Activated CD4-positive, alpha-beta T cell treated with anti-CD3 and anti-CD28 coated beads, Interleukin-2, amount 10 ng/mL, durations not matched to agents 24 days and 14 days (primary cell): ENCODE measurements at regions of chr7 and their contacts with region 1.

Region 1: DNA sequence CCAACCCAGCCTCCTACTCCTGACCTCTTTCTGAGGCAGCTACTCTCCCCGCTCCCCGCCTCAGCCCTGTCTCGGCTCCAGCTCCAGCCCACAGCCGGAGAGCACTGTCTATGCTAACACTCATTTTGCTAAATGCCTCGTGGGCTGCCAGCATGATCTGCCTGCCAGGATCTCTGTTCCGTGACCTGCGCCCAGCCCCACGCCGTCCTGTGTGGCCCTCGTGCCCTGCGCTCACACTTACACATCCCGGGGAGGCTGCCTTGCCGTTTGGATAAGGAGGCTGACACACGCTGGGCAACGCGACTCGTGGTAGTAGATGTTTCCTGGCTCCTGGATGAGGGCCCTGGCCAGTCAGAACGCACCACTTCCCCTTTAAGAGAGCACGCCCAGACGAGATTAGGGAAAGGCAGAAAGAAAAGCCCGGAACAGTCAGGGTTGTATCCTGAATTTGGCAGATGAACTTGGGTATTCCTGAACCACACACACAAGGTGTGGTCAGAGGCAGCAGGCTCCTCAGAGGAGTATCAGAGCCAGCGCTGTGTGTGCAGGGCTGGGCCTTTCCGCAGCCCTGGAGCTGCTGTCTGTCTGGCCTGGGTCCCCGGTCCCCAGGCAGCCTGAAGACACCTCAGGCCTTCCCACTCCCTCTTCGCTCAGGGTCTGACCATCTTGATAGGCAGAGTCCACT is 97.7 kb upstream of the EFCAB10 start:
- DNase-seq: peak; percentile 81
- H3K4me3 Mint-ChIP-seq: peak overlapping the region; percentile 90
- H3K27ac Mint-ChIP-seq: peak overlapping the region; percentile 93
- H3K4me1 Mint-ChIP-seq: peaks cover 52% of the 10 kb centered on the region
- H3K27me3 Mint-ChIP-seq: peaks cover 2% of the 10 kb centered on the region

Region 2: DNA sequence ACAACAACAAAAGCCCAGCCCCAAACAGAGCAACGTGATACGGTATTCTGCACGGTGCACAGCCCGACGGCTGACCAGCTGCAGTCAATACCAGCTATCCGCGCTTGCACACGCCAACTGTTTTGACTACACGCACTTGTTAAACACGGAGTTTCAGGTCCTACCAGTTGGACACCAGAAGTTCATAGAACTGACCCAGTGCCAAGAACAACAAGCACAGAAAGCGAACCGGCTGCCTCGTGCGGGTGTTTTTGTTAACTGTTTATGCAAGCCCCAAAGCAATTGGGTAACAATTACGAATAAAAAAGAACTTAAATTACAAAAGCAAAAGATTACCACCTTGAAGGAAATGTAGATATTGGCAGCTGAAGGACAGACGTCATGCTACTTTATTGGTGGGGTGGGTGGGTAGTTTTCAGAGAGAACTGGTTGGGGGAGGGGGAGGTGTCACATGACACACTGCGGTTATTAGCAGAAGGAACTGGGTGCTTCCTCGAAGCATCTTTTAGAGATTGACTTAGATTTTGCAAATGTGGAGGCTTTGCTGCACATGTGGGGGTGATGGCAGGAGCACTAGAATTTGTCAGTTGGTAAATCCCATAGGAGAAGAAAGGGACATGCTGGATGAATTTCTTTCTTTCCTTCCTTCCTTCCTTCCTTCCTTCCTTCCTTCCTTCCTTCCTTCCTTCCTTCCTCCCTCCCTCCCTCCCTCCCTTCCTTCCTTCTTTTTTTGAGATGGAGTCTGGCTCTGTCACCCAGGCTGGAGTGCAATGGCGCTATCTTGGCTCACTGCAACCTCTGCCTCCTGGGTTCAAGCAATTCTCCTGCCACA is 13.0 kb after region 1 on chr7:
- intact Hi-C with region 1: loop called (anchors 1 kb)
- DNase-seq: peak; percentile 82
- H3K4me3 Mint-ChIP-seq: peak overlapping the region; percentile 87
- H3K27ac Mint-ChIP-seq: peak overlapping the region; percentile 88
- H3K4me1 Mint-ChIP-seq: peaks cover 34% of the 10 kb centered on the region
- H3K27me3 Mint-ChIP-seq: no peaks in the 10 kb centered on the region

Region 3: DNA sequence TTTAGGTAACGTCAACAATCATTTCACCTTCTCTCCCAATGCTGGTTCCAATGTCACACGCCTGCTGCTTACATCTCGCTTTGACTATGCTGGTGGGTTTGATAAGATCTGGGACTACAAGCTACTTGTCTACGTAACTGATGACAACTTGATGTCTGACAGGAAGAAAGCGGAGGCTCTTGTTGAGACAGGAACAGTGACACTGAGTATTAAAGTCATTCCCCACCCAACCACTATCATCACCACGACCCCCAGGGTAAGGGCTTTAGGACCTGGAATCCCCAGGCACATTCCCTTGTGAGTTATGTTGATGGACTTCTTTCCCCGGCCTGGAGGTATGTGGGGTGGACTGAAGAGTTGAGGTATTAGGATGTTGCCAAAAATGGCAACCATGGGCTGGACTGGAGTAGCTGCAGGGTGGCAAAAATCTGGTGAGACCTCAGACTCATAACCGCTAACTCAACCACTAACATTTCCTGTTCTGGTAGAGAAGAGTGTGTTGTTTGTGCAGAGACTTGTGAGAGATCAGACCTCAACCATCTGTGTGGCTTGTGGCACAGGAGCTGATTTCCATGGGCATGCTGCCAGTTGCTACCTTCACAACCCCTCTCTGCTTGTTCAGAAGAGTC is 343.4 kb after region 1 on chr7:
- intact Hi-C with region 1: loop called (anchors 1 kb)
- DNase-seq: peak; percentile 88
- H3K4me3 Mint-ChIP-seq: peak overlapping the region; percentile 63
- H3K27ac Mint-ChIP-seq: peak overlapping the region; percentile 83
- H3K4me1 Mint-ChIP-seq: peaks cover 56% of the 10 kb centered on the region
- H3K27me3 Mint-ChIP-seq: peaks cover 5% of the 10 kb centered on the region